ENCODE measurements at regions of chr6 and their contacts with region 1.

Region 1: GRCh38 chr6:43143235-43144124 is 27.6 kb upstream of the SRF start:
- DNase-seq: peak; percentile 75
- H3K4me3 ChIP-seq: no peak overlapping the region
- CTCF ChIP-seq: peak; percentile 98

Region 2: GRCh38 chr6:41209547-41210320 is 1933.7 kb before region 1 on chr6:
- CTCF ChIA-PET with region 1: no interaction called
- POLR2A ChIA-PET with region 1: no interaction called
- DNase-seq: no peak
- H3K4me3 ChIP-seq: no peak overlapping the region
- CTCF ChIP-seq: no peak

Region 3: DNA sequence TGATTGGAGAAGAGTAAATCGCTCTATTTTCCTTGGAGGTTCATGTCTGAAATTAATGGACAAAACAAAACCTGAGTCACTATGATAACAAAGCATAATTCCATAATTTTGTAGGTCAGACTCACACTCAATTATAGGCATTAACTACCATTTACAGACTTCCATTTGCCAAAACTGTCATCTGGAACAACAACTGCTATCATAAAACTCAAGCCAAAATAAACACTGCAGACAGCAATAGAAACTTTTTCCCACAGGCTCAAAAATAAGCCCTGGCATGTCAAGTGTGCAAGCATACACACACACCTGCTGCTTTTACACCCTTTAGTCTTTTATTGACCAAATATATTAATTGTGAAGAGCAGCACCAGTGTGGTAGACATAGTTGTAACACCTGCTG is 932.9 kb before region 1 on chr6:
- CTCF ChIA-PET with region 1: no interaction called
- POLR2A ChIA-PET with region 1: no interaction called
- DNase-seq: no peak
- H3K4me3 ChIP-seq: no peak overlapping the region
- CTCF ChIP-seq: no peak

Region 4: GRCh38 chr6:42710316-42710715 is 433.2 kb before region 1 on chr6:
- CTCF ChIA-PET with region 1: no interaction called
- POLR2A ChIA-PET with region 1: no interaction called
- DNase-seq: no peak
- H3K4me3 ChIP-seq: no peak overlapping the region
- CTCF ChIP-seq: no peak

Region 5: GRCh38 chr6:42901536-42901957 is 241.9 kb before region 1 on chr6:
- CTCF ChIA-PET with region 1: interaction called, 17 read pairs
- POLR2A ChIA-PET with region 1: no interaction called
- DNase-seq: no peak
- H3K4me3 ChIP-seq: no peak overlapping the region
- CTCF ChIP-seq: peak; percentile 66

Region 6: GRCh38 chr6:43021270-43022047 is 122.0 kb before region 1 on chr6 and contains the start of gene RRP36:
- CTCF ChIA-PET with region 1: interaction called, 13 read pairs
- POLR2A ChIA-PET with region 1: interaction called, 5 read pairs
- DNase-seq: no peak
- H3K4me3 ChIP-seq: peak within 1 kb of the TSS; percentile 97
- CTCF ChIP-seq: no peak

Region 7: DNA sequence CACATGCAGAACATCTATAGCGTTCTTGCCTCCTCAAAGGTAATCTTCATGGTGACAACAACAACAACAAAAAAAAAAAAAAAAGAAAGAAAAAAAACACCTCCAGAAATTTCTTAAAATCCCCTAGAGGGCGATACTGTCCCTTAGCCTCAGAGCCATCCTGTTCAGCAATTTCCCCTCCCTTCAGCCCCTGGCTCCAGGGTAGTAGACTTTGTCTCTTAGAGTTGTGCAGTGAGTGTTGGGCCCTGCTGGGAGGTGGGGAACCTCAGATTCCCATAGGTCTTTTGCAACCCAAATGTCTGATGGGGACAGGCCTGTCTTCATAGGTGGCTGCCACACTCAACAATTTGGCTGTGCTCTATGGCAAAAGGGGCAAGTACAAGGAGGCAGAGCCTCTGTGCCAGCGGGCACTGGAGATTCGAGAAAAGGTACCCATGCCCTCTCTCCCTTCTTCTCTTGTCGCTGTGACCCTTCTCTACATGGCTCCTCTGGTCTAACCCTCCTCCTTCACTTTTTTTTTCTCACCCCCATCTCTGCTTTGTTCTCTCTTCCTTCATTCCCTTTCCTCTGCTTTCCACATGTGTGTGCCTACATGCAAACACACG is 73.3 kb before region 1 on chr6:
- CTCF ChIA-PET with region 1: interaction called, 183 read pairs
- POLR2A ChIA-PET with region 1: no interaction called
- DNase-seq: no peak
- H3K4me3 ChIP-seq: no peak overlapping the region
- CTCF ChIP-seq: peak; percentile 44

Region 8: DNA sequence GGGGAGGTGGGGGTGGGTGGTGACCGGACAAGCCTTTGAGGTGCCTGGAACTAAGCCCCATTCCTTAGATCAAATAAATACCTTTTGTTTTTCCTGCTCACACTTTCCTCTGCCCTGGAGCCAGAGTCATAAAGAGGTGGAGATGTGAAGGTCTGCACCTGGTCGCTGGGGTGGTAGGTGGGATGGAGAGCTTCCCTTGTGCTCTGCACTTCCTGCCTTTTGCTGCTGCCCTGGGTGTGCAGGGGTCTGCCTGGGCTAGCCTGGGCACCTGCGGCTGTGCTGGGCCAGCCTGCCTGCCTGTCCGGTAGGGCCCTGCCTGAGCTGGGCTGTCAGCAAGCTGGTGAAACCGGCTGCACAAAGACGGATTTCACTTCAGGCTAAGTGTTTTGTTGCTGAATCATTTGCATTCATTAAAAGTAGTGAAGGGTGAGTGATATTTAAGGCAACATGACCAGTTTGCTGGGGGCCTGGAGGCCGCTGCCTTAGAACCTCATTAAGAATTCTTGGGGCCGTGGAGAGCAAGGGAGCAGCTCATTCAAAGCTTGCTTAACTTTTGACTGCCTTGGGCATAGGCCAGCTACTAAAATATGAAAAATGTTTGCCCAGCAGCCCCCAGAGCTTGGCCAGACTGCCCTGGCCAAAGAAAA is 46.9 kb before region 1 on chr6:
- CTCF ChIA-PET with region 1: interaction called, 14 read pairs
- POLR2A ChIA-PET with region 1: no interaction called
- DNase-seq: peak; percentile 88
- H3K4me3 ChIP-seq: peak overlapping the region; percentile 25
- CTCF ChIP-seq: no peak

Region 9: DNA sequence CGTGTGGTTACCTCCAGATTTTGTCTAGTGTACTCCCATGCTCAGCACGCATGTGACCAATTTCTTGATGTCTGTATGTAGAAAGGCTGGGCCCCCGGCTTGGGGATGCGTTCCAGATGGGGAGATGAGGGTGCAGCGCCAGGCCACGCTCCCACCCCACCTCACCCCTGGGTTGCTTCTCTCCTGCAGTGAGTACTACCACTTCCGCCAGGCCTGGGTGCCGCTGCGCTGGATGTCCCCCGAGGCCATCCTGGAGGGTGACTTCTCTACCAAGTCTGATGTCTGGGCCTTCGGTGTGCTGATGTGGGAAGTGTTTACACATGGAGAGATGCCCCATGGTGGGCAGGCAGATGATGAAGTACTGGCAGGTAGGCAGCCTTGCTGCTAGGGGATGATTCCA is 16.1 kb after region 1 on chr6:
- CTCF ChIA-PET with region 1: interaction called, 37 read pairs
- POLR2A ChIA-PET with region 1: no interaction called
- DNase-seq: no peak
- H3K4me3 ChIP-seq: no peak overlapping the region
- CTCF ChIP-seq: no peak

Region 10: GRCh38 chr6:43286980-43287716 is 143.7 kb after region 1 on chr6:
- CTCF ChIA-PET with region 1: no interaction called
- POLR2A ChIA-PET with region 1: no interaction called
- DNase-seq: no peak
- H3K4me3 ChIP-seq: no peak overlapping the region
- CTCF ChIP-seq: peak; percentile 11